ENCODE measurements at regions of chr1 and their contacts with region 1.

Region 1: DNA sequence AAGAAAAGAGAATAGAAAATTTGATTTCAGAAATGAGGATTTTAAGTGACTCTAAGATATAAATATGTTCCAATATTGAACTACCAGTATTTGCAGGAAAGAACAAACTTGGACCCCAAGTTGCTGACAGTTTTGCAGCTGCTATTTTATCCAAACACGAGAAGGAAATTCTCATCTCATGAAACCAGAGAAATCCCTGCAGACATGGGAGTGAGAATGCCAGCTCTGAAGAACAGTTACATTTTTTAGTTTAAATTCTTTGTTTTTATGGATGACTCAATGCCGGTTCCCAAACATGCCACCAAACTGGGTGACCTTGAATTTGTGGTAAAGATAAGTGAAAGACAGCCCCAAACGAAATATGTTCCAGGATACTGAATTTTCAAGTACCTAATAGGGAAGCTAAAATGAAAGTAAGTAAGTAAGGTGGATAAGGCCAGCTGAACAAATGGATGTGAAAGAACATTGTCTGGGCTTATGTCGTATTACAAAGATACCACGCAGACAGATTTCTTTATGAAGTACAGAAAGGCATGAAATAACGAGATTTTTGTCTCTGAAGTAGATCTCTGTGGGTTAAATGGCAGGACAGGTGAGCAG is 19.9 kb downstream of the TLR5 start:
- DNase-seq: no peak
- H3K4me3 Mint-ChIP-seq: peak overlapping the region; percentile 29
- H3K27ac Mint-ChIP-seq: no peak overlapping the region
- H3K4me1 Mint-ChIP-seq: peaks cover 8% of the 10 kb centered on the region
- H3K27me3 Mint-ChIP-seq: peaks cover 8% of the 10 kb centered on the region

Region 2: GRCh38 chr1:223133824-223134435 is 10.8 kb after region 1 on chr1:
- CTCF ChIA-PET with region 1: interaction called, 48 read pairs
- DNase-seq: peak; percentile 83
- H3K4me3 Mint-ChIP-seq: peak overlapping the region; percentile 2
- H3K27ac Mint-ChIP-seq: no peak overlapping the region
- H3K4me1 Mint-ChIP-seq: peaks cover 8% of the 10 kb centered on the region
- H3K27me3 Mint-ChIP-seq: peaks cover 54% of the 10 kb centered on the region

Region 3: DNA sequence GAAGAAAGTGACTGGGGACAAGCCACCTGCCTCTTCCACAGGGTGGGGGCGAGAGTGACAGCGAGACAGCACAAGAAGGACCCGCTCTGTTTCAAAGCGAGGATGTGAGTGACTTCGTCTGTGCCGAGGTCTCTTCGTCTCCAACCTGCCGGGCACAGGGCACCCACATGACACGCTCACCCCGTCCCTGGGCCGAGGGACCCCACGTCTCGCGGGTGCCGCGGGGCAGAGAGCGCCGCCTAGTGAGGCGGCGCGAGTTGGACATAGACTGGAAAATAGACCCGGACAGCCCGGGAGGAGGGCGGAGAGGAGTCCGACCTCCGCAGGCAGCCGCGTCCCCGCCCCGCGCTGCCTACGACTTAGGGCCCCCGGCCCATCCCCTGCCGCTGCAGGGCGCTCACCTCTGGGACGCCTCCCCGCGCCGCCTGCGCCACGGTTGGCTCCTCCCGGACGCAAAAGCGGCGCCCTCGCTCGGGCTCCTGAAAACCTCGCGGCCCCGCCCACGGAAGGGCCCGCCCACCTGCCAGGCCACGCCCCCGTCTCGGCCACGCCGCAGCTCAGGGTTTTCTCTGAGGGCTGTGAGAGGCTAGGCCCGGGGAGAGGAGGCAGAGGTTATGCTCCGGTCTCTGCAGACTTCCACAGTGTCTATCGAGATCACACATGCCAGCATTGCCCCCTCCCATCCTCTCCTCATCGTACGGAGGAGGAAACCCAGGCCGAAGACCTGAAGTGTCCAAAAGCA is 19.9 kb after region 1 on chr1 and contains the start of gene TLR5:
- CTCF ChIA-PET with region 1: interaction called, 33 read pairs
- DNase-seq: peak; percentile 92
- H3K4me3 Mint-ChIP-seq: peak within 1 kb of the TSS; percentile 59
- H3K27ac Mint-ChIP-seq: peak within 1 kb of the TSS; percentile 24
- H3K4me1 Mint-ChIP-seq: peaks cover 13% of the 10 kb centered on the region
- H3K27me3 Mint-ChIP-seq: peaks cover 14% of the 10 kb centered on the region

Measured in activated naive CD4-positive, alpha-beta T cell treated with anti-CD3 and anti-CD28 coated beads, Interleukin-2, amount 10 ng/mL, durations not matched to agents 7 days and 5 days (primary cell).